Cardiac septum (tissue), 1 donor: ENCODE measurements at regions of chr9 and their contacts with region 1.

Region 1: GRCh38 chr9:80797831-80798688 is 891.3 kb downstream of the TLE1 start:
- DNase-seq: no peak

Region 2: GRCh38 chr9:80649001-80649420 is 149.0 kb before region 1 on chr9:
- intact Hi-C with region 1: loop called (anchors 5 kb)
- DNase-seq: peak; percentile 61